Left ventricle myocardium inferior (tissue), 1 donor: ENCODE measurements at regions of chr7 and their contacts with region 1.

Region 1: DNA sequence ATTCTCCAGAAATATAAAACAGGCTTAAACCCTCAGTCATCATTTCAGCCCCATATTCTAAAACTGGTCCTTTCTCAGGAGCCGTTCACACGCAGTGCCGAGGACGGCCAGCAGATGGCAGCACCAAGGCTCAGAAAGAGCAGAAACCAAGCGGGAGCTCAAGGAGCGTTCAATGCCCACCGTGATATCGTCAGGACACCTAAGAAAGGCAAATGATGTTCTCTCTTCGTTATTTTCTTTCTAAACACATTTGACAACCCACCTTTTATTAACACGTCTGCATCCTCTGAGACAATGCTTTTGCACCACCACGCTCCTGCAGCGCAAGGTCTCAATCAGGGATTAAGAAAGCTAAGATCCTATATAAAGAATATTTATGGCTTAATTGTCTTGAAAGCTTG is 45.7 kb upstream of the RBM33 start:
- DNase-seq: peak; percentile 76
- H3K4me3 ChIP-seq: no peak overlapping the region
- H3K27ac ChIP-seq: no peak overlapping the region
- H3K4me1 ChIP-seq: no peaks in the 10 kb centered on the region
- H3K27me3 ChIP-seq: peaks cover 74% of the 10 kb centered on the region
- CTCF ChIP-seq: peak; percentile 99

Region 2: DNA sequence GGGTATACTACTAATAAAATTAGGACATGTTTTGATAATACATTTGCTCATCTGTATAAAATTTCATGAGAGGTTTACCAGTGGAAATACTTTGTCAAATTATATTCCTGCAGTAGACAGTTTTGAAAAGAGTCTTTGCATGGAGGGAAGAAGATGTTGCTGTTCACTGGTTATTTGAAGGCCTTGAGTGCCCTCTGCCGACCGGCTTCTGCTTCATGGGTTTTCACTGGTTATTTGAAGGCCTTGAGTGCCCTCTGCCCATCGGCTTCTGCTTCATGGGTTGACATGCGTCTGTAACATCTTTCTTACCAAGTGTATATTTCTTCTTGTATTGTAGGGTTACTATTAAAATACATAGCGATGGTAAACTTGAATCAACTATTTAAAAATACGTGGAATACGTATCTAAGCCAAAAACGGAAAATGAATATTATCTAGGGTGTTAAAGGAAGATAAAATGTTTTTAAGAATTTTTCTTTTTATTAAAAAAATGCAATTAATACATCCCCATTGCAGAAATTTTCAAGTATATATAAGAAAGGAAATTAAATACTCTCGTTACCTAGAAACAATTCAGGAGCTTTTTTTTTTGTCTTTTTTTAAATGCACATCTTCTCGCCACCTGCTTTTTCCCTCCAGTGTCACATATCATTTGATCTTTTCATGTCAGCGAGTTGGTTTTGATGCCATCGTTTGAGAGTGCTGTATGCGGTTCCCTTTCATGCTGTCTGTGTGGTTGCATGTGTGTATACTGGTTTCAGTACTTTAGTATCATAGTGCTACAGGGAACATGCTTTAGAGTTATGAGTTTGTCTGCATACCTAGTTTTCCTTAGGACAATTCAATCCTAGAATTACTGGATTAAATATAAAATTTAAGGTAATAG is 140.1 kb after region 1 on chr7:
- intact Hi-C with region 1: loop called (anchors 2 kb)
- DNase-seq: peak; percentile 75
- H3K4me3 ChIP-seq: no peak overlapping the region
- H3K27ac ChIP-seq: no peak overlapping the region
- H3K4me1 ChIP-seq: peaks cover 4% of the 10 kb centered on the region
- H3K27me3 ChIP-seq: no peaks in the 10 kb centered on the region
- CTCF ChIP-seq: peak; percentile 72

Region 3: GRCh38 chr7:155769701-155770100 is 170.9 kb after region 1 on chr7:
- intact Hi-C with region 1: loop called (anchors 2 kb)
- DNase-seq: no peak
- H3K4me3 ChIP-seq: no peak overlapping the region
- H3K27ac ChIP-seq: no peak overlapping the region
- H3K4me1 ChIP-seq: peaks cover 4% of the 10 kb centered on the region
- H3K27me3 ChIP-seq: no peaks in the 10 kb centered on the region
- CTCF ChIP-seq: no peak